ENCODE measurements at regions of chr20 and their contacts with region 1.

Region 1: GRCh38 chr20:57332102-57333089 is 2.8 kb downstream of the SPO11 start:
- DNase-seq: peak; percentile 65
- H3K4me3 ChIP-seq: no peak overlapping the region
- H3K27ac ChIP-seq: no peak overlapping the region
- H3K4me1 ChIP-seq: peaks cover 49% of the 10 kb centered on the region
- CTCF ChIP-seq: peak; percentile 98

Region 2: DNA sequence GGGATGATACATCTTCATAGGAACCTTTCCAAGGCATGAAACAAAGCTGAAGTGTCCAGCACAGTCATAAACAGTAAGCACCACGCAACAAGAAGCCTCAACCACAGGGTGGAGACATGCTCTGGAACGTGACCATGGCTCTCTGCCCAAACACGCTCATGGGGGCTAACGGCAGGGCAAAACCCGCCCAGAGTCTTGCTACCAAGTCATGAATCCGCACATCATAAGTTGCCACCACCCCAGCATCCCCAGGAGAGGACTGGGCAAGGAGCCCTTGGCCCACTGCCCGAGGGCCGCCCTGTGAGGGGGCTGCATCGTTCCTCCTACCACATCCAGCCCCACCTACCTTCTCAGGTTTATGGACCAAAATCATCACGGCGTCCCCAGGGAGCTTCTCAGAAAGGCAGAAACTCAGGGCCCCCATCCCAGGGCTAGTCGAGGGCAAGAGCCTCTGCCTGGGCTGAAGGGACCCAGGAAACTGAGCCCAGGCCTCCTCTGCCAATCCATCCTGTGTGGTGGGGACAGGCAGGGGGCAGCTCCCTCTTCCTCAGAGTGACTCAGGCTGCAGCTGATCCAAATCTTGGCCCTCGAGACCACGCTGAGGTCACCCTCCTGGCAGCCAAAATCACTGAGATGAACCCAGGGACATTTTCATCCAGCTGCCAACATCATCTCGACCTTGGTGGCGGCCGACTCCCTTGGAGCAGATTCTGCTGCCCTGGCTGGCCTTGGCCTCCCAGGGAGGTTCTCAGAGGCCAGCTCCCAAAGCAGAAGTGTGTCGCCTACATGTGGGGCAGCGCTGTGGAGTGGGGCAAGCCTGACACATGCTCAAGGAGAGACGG is 108.5 kb before region 1 on chr20:
- CTCF ChIA-PET with region 1: interaction called, 3 read pairs
- POLR2A ChIA-PET with region 1: interaction called, 4 read pairs
- intact Hi-C with region 1: loop called (anchors 1 kb)
- DNase-seq: peak; percentile 41
- H3K4me3 ChIP-seq: no peak overlapping the region
- H3K27ac ChIP-seq: no peak overlapping the region
- H3K4me1 ChIP-seq: peaks cover 5% of the 10 kb centered on the region
- CTCF ChIP-seq: peak; percentile 62

Region 3: GRCh38 chr20:57263801-57264792 is 68.3 kb before region 1 on chr20:
- CTCF ChIA-PET with region 1: no interaction called
- POLR2A ChIA-PET with region 1: no interaction called
- intact Hi-C with region 1: no loop called
- DNase-seq: no peak
- H3K4me3 ChIP-seq: peak overlapping the region; percentile 85
- H3K27ac ChIP-seq: peak overlapping the region; percentile 56
- H3K4me1 ChIP-seq: peaks cover 70% of the 10 kb centered on the region
- CTCF ChIP-seq: peak; percentile 12; the same call in 1 of the 2 replicates